ENCODE measurements at regions of chr12 and their contacts with region 1.

Region 1: DNA sequence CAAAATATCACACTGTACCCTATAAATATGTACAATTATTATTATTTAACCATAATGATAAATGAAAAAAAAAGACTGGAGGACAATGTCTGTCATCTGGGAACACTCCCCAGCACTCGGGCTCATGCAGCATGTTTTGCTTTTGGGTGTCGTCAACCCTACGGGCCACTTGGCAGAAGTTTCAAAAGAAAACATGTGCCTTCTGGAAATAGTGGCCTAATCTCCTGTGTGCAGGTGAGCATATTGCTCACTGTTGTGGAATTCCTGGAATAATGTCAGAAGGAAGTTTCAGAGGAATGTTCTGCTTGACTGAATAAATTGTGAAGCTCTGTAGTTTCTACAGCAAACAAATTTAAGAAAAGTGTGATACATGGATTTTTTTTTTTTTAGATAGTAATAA is 298.3 kb downstream of the SSPN start:
- DNase-seq: no peak
- H3K4me3 ChIP-seq: no peak overlapping the region
- H3K27ac ChIP-seq: no peak overlapping the region
- H3K4me1 ChIP-seq: no peaks in the 10 kb centered on the region
- H3K27me3 ChIP-seq: no peaks in the 10 kb centered on the region
- CTCF ChIP-seq: no peak
- EP300 ChIP-seq: no peak
- POLR2A ChIP-seq: no peak

Region 2: GRCh38 chr12:28051516-28052354 is 1558.1 kb after region 1 on chr12:
- intact Hi-C with region 1: loop called in 1 of 4 experiments (anchors 5 kb)
- DNase-seq: no peak
- H3K4me3 ChIP-seq: no peak overlapping the region
- H3K27ac ChIP-seq: no peak overlapping the region
- H3K4me1 ChIP-seq: no peaks in the 10 kb centered on the region
- H3K27me3 ChIP-seq: no peaks in the 10 kb centered on the region
- CTCF ChIP-seq: no peak
- EP300 ChIP-seq: no peak
- POLR2A ChIP-seq: no peak